IMR-90 (cell line): ENCODE measurements at regions of chr11 and their contacts with region 1.

Region 1: DNA sequence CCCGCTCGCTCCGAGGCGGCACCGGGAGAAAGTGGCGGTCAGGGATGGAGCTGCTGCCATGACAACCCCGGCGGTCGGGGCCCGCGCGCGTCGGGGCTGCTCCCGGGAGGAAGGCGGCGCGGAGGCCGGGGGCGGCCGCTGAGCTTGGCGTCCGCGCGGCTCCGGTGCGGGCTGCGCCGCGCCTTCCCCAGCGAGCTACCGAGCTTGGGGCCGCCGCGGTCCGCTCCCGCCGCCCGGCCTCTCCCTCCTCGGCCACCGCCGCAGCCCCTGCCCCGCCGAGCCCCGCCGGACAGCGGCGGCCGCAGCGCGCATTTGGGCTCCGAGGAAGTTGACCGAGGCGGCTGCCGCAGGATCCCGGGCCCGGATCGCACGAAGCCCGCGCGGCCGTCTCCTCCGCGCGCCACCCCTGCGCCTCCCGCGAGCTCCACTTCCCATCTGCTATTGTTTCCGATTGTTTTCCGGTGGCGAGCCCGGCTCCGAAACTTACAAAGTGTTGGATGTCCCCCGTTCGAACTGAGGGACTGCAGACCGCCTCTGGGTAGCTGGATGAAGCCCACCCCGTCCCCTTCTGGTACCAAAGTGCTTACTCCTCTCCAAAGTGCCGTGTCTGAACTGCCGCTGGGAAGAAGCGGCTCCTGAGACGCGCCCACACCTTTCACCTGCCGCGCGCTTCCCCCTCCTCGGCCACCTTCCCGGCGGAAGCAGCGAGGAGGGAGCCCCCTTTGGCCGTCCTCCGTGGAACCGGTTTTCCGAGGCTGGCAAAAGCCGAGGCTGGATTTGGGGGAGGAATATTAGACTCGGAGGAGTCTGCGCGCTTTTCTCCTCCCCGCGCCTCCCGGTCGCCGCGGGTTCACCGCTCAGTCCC is 540.3 kb downstream of the NTM start:
- DNase-seq: peak; percentile 43
- ATAC-seq: peak; percentile 60
- H3K4me3 ChIP-seq: peak overlapping the region; percentile 72
- H3K27ac ChIP-seq: peak overlapping the region; percentile 26
- H3K4me1 ChIP-seq: peaks cover 5% of the 10 kb centered on the region
- H3K27me3 ChIP-seq: no peaks in the 10 kb centered on the region
- CTCF ChIP-seq: no peak
- POLR2A ChIP-seq: no peak
- RAD21 ChIP-seq: no peak; the same call in 1 of the 2 replicates

Region 2: GRCh38 chr11:131481303-131481702 is 429.5 kb before region 1 on chr11:
- CTCF ChIA-PET with region 1: no interaction called
- POLR2A ChIA-PET with region 1: no interaction called
- dilution Hi-C with region 1: no loop called
- in situ Hi-C with region 1: no loop called
- intact Hi-C with region 1: no loop called
- DNase-seq: no peak
- ATAC-seq: no peak
- H3K4me3 ChIP-seq: no peak overlapping the region
- H3K27ac ChIP-seq: no peak overlapping the region
- H3K4me1 ChIP-seq: no peaks in the 10 kb centered on the region
- H3K27me3 ChIP-seq: no peaks in the 10 kb centered on the region; the same call in 1 of the 2 replicates
- CTCF ChIP-seq: no peak
- POLR2A ChIP-seq: no peak
- RAD21 ChIP-seq: no peak

Region 3: DNA sequence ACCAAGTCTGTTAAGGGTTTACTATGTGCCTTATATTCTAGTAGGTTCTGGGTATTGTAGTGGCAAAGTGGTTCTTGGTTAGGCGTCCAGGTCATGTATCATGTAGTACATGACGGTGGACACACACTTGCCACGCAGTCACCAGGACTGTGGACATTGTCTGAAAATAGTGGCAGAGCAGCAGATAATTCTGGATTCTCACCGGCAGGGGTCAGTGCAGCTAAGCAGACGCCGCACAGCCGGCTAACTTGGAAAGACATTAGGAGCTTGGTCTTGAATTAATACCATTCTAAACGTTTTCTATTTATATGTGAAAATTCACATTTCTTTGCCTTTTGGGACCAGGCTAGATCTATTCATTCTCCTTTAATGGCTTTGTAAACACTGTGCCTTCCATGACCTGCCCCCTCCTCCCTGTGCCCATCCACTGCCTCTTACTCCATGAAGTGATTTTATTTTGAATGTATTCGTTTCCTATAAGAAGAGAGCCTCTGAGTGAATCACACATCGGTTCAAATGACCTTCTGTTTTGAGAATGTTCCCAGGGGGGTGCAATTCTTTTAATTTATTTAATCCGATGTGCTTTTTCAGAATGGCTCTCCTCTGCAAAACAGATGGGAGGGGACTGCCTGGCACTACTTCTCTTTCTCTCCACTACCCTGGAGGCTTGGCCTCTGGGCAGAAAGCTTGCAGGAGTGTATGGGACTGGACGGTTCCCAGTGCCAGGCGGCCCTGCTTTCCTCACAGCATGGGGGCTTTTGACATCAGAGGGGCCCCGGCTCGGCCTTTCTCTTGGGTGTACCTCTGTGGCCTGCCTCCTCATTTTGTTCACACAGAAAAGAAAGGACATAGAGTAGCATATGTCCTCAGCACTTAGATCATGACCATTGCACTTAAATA is 162.4 kb before region 1 on chr11:
- CTCF ChIA-PET with region 1: interaction called, 5 read pairs
- POLR2A ChIA-PET with region 1: no interaction called
- dilution Hi-C with region 1: no loop called
- in situ Hi-C with region 1: no loop called
- intact Hi-C with region 1: loop called (anchors 1 kb)
- DNase-seq: peak; percentile 79
- ATAC-seq: peak; percentile 69
- H3K4me3 ChIP-seq: no peak overlapping the region
- H3K27ac ChIP-seq: no peak overlapping the region; the same call in 1 of the 2 replicates
- H3K4me1 ChIP-seq: peaks cover 17% of the 10 kb centered on the region
- H3K27me3 ChIP-seq: no peaks in the 10 kb centered on the region
- CTCF ChIP-seq: peak; percentile 88
- POLR2A ChIP-seq: no peak
- RAD21 ChIP-seq: peak; percentile 90

Region 4: DNA sequence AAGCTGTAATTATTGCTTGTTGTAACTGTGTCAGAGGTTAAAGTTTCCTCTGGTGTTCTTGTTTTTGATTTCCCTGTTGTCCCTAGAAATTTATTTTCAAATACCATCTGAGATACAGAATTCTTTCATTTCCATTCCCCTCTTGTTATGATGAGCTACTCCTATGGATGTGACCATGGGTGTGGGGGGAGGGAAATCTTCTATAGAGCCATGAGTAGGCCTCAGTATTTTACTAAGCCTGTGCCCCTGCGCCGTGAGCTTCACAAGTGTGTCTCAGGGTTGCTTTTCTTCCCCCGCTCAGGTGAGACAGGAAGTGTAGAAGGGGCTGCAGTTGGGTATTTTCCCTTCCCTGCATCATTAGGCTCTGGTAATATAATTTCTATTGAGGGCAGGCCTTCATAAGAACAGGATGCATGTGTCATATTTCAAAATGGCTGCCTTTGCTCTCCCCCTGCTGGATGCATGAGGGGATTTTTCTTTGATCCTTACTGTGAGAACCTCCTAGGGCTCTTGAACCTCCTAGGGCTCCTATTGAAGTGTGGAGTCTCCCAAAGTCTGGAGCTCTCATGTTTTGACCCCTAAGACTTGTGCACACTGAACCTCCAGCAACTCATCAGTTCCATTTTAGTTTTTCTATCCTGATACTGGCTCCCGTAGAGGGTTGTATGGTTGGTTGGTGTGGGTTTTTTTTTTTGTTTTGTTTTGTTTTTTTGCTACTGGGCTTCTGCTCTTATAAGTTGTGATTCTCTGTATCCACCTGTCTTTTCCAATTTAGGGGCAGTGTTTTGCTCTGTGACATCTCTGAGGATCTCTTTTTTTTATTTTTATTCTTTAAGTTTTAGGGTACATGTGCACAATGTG is 117.9 kb after region 1 on chr11:
- CTCF ChIA-PET with region 1: no interaction called
- POLR2A ChIA-PET with region 1: no interaction called
- dilution Hi-C with region 1: no loop called
- in situ Hi-C with region 1: no loop called
- intact Hi-C with region 1: loop called (anchors 2 kb)
- DNase-seq: peak; percentile 73
- ATAC-seq: 0 out of 2 replicates have a peak, but pooled peaks have one; percentile 27
- H3K4me3 ChIP-seq: no peak overlapping the region
- H3K27ac ChIP-seq: no peak overlapping the region
- H3K4me1 ChIP-seq: peaks cover 23% of the 10 kb centered on the region
- H3K27me3 ChIP-seq: no peaks in the 10 kb centered on the region
- CTCF ChIP-seq: peak; percentile 61
- POLR2A ChIP-seq: no peak
- RAD21 ChIP-seq: peak; percentile 47

Region 5: DNA sequence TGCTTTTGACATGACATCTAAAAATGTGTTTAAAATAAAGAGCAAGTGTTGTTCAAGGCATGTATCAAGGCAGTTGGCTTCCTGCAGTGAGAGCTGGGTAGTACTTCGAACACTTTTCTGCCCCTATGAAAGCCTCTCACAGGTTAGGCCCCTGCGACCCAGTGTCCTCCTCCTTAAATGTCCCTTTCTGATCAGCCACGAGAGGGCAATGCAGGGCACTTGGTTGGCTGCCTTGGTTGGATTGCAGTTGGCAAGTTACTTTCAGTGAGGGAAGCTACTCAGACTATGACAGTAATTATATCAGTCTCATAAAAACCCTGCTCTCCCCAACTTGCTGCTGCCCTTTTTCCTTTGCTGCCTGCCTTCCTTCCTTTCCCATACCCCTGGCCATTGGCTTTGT is 203.4 kb after region 1 on chr11:
- CTCF ChIA-PET with region 1: interaction called, 4 read pairs
- POLR2A ChIA-PET with region 1: no interaction called
- dilution Hi-C with region 1: no loop called
- in situ Hi-C with region 1: no loop called
- intact Hi-C with region 1: loop called (anchors 5 kb)
- DNase-seq: peak; percentile 25
- ATAC-seq: no peak
- H3K4me3 ChIP-seq: no peak overlapping the region
- H3K27ac ChIP-seq: no peak overlapping the region
- H3K4me1 ChIP-seq: peaks cover 7% of the 10 kb centered on the region
- H3K27me3 ChIP-seq: no peaks in the 10 kb centered on the region
- CTCF ChIP-seq: peak; percentile 29; the same call in 1 of the 2 replicates
- POLR2A ChIP-seq: no peak
- RAD21 ChIP-seq: peak; percentile 28; the same call in 1 of the 2 replicates